ENCODE measurements at regions of chr17 and their contacts with region 1.

Region 1: DNA sequence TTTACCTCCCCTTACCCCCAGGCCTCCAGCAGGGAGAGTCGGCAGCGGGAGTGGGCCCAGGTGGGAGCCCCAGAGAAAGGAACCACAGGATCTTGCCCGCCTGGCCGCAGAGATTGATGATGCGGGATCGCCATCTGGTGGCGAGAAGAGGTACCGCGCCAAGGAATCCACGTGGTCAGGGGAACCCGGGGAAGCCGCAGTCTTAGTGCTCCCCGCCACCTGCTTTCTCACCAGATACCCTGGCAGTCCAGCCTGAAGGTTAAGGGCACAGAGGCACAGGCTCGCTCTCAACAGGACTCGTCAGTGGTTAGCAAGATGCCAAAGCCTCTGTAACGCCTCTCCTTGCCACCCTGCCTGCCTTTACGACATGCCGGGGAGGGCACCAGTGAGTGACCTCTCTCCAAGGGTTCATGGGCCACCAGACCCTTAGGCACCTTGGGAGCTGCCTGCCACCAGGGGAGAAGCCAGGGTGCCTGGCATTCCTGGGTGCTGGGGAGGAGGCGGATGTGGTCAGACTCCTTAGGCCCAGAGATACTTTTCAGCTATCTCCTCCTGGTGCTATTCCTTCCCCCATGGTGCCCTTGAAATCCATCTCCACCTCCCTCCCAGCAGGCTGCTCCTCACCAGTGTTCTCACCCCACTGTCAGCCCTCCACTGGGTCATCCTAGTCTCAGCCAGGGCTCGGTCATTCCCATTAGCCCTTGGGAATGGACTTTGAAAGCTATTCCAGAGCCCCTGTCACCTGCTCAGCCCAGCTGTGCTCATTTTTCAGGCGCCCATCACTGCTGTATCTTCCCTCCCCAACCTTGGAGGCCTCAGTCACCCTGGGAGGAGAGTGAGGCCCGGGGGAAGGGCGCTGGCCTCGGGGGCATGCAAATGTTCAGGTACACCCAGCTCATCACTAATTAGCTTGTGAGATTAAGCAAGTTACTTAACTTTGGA is 5.5 kb upstream of the RHBDF2 start:
- DNase-seq: peak; percentile 90
- ATAC-seq: peak; percentile 83

Region 2: GRCh38 chr17:76304226-76305134 is 202.2 kb before region 1 on chr17:
- intact Hi-C with region 1: loop called (anchors 5 kb)
- DNase-seq: no peak
- ATAC-seq: no peak

Region 3: DNA sequence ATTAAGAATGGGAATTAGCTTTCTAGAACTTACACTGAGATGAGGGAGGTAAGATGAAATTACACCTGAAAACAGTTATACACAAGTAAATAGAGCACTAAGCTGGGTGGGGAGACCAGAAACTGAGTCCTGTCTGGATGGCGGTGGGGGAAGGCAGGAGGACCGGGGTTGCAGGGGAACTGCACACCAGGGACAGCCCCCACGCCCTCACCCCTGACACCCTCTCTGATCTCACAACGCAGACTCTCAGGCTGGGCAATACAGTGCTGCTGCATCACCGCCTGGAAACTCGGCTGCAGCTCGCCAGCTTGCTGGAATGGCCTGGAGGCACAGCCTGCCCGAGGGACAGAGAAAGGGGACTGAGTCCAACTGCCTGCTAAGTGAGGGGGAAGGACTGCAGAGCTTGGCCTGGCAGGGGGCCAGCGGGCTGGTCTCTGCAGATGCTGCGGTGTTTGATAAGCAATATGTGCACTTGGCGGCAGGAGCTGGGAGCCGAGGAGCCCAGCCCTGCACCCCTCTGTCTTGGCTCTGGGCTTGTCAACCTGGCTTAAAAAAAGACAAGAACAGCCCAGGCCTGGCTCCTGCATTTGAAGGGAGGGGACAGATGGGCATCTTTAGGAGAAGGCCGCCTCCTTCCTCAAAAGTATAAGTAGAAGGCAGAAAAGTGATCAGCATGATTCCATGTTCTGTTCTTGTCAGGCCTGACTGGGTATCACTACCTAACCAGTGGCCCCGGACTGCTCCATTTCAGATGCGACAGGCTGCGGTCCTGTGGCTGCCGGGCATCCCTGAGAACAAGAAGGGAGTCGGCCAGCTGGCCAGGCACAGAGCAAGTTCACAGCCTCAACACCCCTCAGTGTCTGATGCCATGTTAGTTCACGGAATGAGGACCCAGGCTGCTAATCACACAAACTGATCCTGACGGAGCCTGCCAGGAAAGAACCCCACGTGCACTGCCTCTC is 92.1 kb before region 1 on chr17:
- intact Hi-C with region 1: loop called (anchors 5 kb)
- DNase-seq: peak; percentile 93
- ATAC-seq: peak; percentile 91

Region 4: DNA sequence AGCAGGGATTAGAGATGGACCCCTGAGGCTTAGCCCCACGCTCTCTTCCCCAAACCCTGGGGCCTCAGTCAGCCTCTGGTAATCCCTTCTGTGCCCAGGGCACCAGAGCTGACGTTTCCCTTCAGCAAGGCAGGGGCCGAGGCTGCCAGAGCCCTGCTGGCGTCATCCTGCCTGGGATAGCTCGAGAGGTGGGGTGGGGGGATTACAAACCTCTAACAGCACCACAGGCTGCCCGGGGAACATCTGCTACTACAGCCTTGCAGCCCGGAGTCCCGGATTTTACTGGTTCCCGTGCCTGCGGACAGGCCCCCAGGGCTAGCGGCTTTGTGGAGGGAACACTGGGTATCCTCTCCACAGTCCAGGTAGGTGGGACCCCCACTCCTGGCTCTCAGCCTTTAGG is 39.3 kb before region 1 on chr17 and contains the start of gene AANAT:
- intact Hi-C with region 1: loop called (anchors 2 kb)
- DNase-seq: peak; percentile 31
- ATAC-seq: no peak
- total RNA-seq, gene AANAT: not detected

Region 5: GRCh38 chr17:76659928-76660614 is 153.4 kb after region 1 on chr17:
- intact Hi-C with region 1: no loop called
- DNase-seq: peak; percentile 53
- ATAC-seq: peak; percentile 71

Measured in Right ventricle myocardium superior (tissue), 1 donor.